A549 (cell line): ENCODE measurements at regions of chr1 and their contacts with region 1.

Region 1: GRCh38 chr1:15603050-15603965 is 13.9 kb upstream of the DDI2 start:
- DNase-seq: peak; percentile 94
- ATAC-seq: peak; percentile 98
- H3K4me3 ChIP-seq: peak overlapping the region; percentile 88
- H3K27ac ChIP-seq: peak overlapping the region; percentile 79 to 84
- H3K4me1 ChIP-seq: peaks cover 15% of the 10 kb centered on the region
- CTCF ChIP-seq: no peak
- EP300 ChIP-seq: no peak
- POLR2A ChIP-seq: peak; percentile 60
- RAD21 ChIP-seq: no peak

Region 2: DNA sequence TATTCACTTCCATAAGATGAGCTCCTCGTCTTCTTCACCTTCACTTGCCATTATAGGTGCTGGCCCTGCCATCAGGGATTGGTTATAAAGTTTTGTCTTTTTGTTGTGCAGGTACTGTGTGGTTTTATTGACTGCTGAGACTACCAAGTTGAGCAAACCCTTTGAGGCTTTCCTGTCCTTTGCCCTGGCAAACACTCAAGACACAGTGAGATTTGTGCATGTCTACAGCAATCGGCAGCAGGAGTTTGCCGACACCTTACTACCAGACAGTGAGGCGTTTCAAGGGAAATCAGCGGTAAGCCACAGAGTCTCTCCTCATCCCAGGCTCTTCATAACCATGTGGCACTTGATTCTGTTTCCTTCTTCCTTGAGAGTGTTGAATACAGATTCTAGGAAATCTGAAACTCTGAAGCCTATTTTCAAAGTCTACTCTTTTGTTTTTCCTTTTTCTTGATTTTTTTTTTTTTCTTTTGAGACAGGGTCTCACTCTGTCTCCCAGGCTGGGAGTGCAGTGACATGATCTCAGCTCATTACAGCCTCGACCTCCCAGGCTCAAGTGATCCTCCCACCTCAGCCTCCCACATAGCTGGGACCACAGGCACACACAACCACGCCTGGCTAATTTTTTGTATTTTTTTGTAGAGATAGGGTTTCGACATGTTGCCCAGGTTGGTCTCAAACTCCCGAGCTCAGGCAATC is 41.1 kb before region 1 on chr1:
- CTCF ChIA-PET with region 1: no interaction called
- POLR2A ChIA-PET with region 1: no interaction called
- DNase-seq: no peak
- ATAC-seq: no peak
- H3K4me3 ChIP-seq: no peak overlapping the region
- H3K27ac ChIP-seq: no peak overlapping the region
- H3K4me1 ChIP-seq: no peaks in the 10 kb centered on the region
- CTCF ChIP-seq: no peak
- EP300 ChIP-seq: no peak
- POLR2A ChIP-seq: no peak
- RAD21 ChIP-seq: no peak

Region 3: DNA sequence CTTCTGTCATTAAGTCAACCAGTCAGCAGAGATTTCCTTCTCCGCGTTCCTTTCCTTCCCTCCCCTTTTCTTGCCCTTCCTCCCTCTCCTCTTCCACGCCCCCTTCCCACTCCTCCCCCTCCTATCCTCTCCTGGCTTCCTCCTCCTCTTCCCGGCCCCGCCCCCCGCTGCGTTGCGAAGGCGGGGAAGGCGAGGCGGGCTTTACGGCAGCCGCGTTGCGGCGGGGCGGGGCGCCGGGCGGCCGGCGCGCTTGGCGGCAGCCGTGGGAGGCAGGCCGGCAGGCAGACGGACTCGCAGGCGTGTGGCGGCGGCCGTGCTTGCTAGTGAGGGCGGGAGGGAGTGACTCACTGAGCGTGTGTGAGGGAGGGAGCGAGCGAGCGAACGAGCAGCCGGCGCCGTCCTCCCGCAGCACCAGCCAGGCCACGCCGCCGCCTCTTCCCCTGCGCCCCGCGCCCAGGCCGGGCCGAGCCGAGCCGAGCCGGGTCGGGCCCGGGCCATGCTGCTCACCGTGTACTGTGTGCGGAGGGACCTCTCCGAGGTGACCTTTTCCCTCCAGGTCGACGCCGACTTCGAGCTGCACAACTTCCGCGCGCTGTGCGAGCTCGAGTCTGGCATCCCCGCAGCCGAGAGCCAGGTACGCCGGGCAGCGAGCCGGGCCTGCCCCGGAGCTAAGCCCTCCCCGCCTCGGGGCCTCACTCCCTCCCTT is 14.0 kb after region 1 on chr1 and contains the start of gene DDI2:
- CTCF ChIA-PET with region 1: interaction called, 3 read pairs
- POLR2A ChIA-PET with region 1: interaction called, 24 read pairs
- DNase-seq: peak; percentile 76 to 95
- ATAC-seq: peak; percentile 92 to 96
- H3K4me3 ChIP-seq: peak within 1 kb of the TSS; percentile 83
- H3K27ac ChIP-seq: peak within 1 kb of the TSS; percentile 90 to 99
- H3K4me1 ChIP-seq: peaks cover 41% of the 10 kb centered on the region
- CTCF ChIP-seq: no peak
- EP300 ChIP-seq: no peak
- POLR2A ChIP-seq: peak; percentile 90
- RAD21 ChIP-seq: no peak
- polyA plus RNA-seq, gene DDI2: 8.6 and 11.1 TPM in 2 replicates

Region 4: DNA sequence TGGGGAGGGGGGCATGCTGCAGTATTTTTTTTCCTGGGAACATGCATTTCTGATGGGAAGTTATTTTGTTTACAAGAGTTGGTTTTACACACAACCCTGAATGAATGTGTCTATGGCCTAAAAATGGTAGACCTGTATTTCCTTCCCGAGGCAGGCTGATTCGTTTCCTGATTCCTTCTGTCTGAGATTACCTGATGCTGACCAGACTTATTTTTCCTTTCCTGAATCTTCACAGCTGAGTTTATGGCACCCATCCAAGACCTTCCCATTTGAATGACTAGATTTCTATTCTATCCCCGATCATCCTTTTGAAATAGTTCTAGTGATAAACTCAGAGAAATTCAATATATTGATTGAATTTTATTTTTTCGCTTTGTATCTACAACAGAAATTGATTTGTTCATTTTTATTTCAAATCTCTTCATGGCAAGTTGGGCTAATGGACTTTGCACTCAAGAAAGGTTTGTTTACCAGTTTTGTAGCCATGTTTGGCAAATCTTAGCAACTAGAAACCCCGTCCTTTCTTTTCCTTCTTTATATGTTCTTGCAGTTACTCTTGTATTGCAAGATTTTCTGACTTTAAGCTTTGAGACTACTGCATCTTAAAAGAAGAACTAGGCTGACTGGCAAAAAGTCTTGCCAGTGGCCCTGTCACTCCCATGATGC is 64.9 kb after region 1 on chr1:
- CTCF ChIA-PET with region 1: no interaction called
- POLR2A ChIA-PET with region 1: no interaction called
- DNase-seq: no peak
- ATAC-seq: no peak
- H3K4me3 ChIP-seq: no peak overlapping the region
- H3K27ac ChIP-seq: no peak overlapping the region
- H3K4me1 ChIP-seq: no peaks in the 10 kb centered on the region
- CTCF ChIP-seq: no peak
- EP300 ChIP-seq: no peak
- POLR2A ChIP-seq: no peak
- RAD21 ChIP-seq: no peak